Motor neuron (in vitro differentiated cells): ENCODE measurements at regions of chr12 and their contacts with region 1.

Region 1: DNA sequence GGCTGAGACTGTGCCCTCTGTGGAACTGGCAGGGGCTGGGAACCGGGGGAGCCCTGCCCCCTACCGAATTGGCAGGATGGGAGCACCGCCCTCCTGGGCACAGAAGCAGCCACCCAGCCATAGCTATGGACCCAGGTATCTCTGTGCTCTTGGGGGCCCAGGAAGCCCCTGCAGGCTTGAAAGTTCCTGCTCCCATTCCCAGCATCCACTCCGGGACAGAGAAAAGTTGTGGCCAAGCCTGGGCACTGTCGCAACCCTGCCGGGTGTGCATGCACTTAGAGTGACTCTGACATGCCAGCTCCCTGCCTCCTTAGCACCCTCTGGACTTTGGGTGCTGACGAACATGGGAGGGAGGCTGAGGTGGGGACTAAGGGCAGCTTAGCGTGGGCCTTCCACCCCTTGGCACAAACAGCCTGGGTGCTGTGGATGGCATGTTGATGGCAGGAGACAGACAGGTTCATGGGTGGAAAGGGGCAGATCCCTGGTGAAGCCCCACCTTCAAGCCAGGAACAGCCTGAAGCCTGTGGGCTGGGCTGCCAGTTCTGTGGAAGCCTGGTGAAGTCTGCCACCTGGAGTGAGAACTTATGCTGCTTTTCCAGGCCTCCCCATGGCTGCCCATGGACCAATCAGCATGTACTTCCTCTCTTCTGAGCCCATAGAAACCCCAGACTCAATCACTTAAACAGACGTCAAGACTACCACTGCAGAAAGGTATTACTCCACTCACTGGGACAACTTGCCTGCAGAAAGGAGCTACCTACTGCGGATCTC is 278.9 kb downstream of the ATXN7L3B start:
- ATAC-seq: peak in 3 of 8 experiments; percentile 32 to 38 (median 34)
- H3K4me3 ChIP-seq: no peak overlapping the region
- H3K27ac ChIP-seq: no peak overlapping the region
- H3K4me1 ChIP-seq: no peaks in the 10 kb centered on the region

Region 2: DNA sequence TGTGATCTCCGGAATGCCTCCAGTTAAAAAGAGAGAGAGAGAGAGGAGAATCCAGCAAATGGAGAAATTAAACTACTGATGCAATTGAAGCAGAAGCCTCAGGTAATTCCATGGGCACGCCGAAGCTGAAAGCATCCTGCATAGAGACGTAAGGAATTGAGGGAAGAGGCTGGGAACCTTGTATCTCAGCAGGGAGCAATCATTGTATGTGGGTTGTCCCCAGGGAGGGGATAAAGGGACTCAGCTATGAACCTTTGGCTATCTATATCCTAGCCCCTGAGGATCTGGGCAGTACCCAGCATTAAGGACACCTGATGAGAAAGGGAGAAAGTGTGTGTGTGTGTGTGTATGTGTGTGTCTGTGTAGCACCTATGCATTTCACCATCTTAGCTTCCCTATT is 374.7 kb before region 1 on chr12:
- in situ Hi-C with region 1: no loop called
- ATAC-seq: no peak
- H3K4me3 ChIP-seq: no peak overlapping the region
- H3K27ac ChIP-seq: no peak overlapping the region
- H3K4me1 ChIP-seq: no peaks in the 10 kb centered on the region

Region 3: GRCh38 chr12:74722709-74723108 is 93.9 kb before region 1 on chr12:
- in situ Hi-C with region 1: no loop called
- ATAC-seq: no peak
- H3K4me3 ChIP-seq: no peak overlapping the region
- H3K27ac ChIP-seq: no peak overlapping the region
- H3K4me1 ChIP-seq: no peaks in the 10 kb centered on the region

Region 4: DNA sequence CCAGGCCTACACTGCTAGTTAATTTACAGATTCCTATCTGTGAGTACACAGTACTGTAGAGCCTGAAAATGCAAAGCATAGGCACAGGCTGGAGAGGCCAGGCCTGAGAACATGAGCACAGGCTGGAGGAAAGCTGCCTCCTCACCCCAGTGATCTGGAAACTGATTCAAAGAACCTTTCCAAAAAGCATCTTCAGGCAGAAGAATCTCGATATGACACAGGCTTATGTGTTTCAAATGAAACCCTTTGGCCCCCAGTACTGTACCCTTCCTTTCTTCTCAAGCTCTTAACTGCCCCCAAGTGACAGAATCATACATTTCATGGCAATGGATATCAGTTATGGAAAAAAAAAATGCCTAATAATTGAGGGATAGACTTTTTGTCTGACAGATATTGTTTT is 271.1 kb after region 1 on chr12:
- in situ Hi-C with region 1: loop called in 1 of 9 experiments (anchors 25 kb)
- ATAC-seq: peak in 4 of 8 experiments; percentile 42 to 88 (median 54)
- H3K4me3 ChIP-seq: no peak overlapping the region
- H3K27ac ChIP-seq: no peak overlapping the region
- H3K4me1 ChIP-seq: no peaks in the 10 kb centered on the region